ENCODE measurements at regions of chr2 and their contacts with region 1.

Region 1: DNA sequence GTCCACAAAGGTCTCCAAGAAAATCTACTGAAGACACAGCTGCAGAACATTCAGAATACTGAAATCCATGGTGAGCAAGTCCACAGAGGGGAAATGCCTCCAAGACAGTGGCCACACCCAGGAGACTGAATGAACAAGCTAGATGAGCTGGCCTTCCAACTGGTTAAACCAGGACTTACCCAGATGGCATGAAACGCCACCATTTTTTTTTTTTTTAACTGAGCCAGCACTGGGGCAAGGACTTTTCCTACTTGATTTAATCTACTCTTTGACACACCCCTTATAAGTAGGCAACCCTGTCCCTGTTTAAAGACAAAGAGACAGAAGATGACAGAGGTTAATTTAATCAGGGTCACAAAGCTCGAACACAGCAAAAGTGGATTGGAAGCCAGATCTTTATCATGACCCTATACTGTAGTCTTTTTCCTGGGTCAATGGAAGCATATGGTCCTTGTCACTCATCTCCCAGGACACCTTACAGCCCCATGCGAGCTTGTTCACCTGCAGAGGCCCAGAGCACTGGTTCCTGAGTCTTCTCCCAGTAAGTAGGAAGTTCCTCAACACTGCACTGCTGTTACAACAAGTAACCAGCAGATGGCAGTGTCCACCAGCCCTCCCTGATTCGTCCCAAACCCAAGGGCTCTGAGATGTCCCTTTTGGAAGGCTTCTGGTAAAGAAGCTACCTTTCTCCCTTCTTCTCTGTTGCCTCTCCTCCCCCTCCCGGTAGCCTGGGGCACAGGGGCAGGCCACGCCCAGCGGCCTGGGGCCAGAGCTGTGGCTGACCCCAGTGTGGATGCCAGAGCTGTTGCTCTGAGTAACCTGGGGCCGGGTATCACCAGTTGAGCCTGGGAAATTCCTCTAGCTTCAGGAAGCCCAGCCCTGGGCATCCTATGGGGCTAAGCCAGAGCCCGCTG is 5.6 kb upstream of the GDF7 start:
- DNase-seq: peak; percentile 69
- ATAC-seq: peak; percentile 94
- H3K4me3 ChIP-seq: no peak overlapping the region
- H3K27ac ChIP-seq: no peak overlapping the region
- H3K4me1 ChIP-seq: peaks cover 0 to 4% of the 10 kb centered on the region in 2 experiments; a peak in 1 of 4 replicates
- H3K27me3 ChIP-seq: peaks cover 35% of the 10 kb centered on the region
- CTCF ChIP-seq: peak; percentile 87 to 98 (median 96)
- POLR2A ChIP-seq: no peak
- RAD21 ChIP-seq: peak; percentile 96

Region 2: GRCh38 chr2:20650880-20651730 is 10.2 kb before region 1 on chr2 and contains the start of gene HS1BP3:
- CTCF ChIA-PET with region 1: interaction called, 12 read pairs
- POLR2A ChIA-PET with region 1: interaction called, 5 read pairs
- RAD21 ChIA-PET with region 1: no interaction called
- intact Hi-C with region 1: no loop called
- DNase-seq: peak; percentile 28
- ATAC-seq: peak; percentile 97
- H3K4me3 ChIP-seq: peak within 1 kb of the TSS; percentile 82 to 95
- H3K27ac ChIP-seq: peak within 1 kb of the TSS; percentile 69
- H3K4me1 ChIP-seq: peaks cover 5 to 18% of the 10 kb centered on the region in 2 experiments
- H3K27me3 ChIP-seq: no peaks in the 10 kb centered on the region
- CTCF ChIP-seq: peak; percentile 28 to 69 (median 59); a peak in 4 of 6 replicates
- POLR2A ChIP-seq: peak; percentile 84
- RAD21 ChIP-seq: peak; percentile 60
- total RNA-seq, gene HS1BP3: 17.1 TPM

Region 3: GRCh38 chr2:20675701-20676352 is 14.5 kb after region 1 on chr2:
- CTCF ChIA-PET with region 1: interaction called, 30 read pairs
- POLR2A ChIA-PET with region 1: no interaction called
- RAD21 ChIA-PET with region 1: no interaction called
- intact Hi-C with region 1: no loop called
- DNase-seq: no peak
- ATAC-seq: peak; percentile 92
- H3K4me3 ChIP-seq: no peak overlapping the region
- H3K27ac ChIP-seq: no peak overlapping the region
- H3K4me1 ChIP-seq: peaks cover 0 to 11% of the 10 kb centered on the region in 2 experiments; a peak in 2 of 4 replicates
- H3K27me3 ChIP-seq: no peaks in the 10 kb centered on the region
- CTCF ChIP-seq: no peak
- POLR2A ChIP-seq: no peak
- RAD21 ChIP-seq: no peak

Region 4: GRCh38 chr2:20916604-20917286 is 255.4 kb after region 1 on chr2:
- CTCF ChIA-PET with region 1: interaction called, 3 read pairs
- POLR2A ChIA-PET with region 1: no interaction called
- RAD21 ChIA-PET with region 1: no interaction called
- intact Hi-C with region 1: loop called (anchors 1 kb)
- DNase-seq: no peak
- ATAC-seq: peak; percentile 77
- H3K4me3 ChIP-seq: no peak overlapping the region
- H3K27ac ChIP-seq: no peak overlapping the region
- H3K4me1 ChIP-seq: no peaks in the 10 kb centered on the region
- H3K27me3 ChIP-seq: peaks cover 64% of the 10 kb centered on the region
- CTCF ChIP-seq: peak; percentile 14 to 41 (median 39); a peak in 5 of 6 replicates
- POLR2A ChIP-seq: no peak
- RAD21 ChIP-seq: peak; percentile 53

Region 5: DNA sequence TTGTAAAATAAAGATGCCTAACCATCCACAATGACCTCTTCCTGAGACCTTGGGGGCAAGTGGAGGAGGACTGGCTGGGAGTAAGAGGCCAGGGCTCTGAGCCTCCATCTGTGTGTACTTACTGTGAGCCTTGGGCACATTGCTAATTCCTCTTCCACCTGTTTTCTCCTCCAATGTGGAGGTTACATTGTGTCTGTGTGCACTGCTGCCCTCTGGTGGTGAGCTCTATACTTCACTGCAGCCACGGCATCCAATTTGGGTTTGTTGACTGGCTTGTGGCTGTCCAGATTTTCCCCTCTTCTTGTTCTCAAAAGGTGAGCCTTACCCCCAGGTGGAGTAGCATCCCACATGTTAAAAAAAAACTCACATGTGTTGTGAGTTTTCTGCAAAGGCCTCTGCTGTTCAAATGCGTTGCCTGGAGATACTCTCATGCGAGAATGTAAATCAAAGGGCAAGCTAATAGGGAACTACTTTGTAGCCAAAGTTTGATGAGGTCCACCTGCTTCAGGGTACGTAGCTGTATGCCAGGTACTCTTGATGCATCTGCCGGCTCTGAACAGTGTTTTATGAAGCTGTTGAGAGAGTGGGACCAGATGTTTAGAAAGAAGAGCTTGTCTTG is 301.7 kb after region 1 on chr2:
- CTCF ChIA-PET with region 1: interaction called, 66 read pairs
- POLR2A ChIA-PET with region 1: no interaction called
- RAD21 ChIA-PET with region 1: interaction called, 15 read pairs
- intact Hi-C with region 1: loop called (anchors 1 kb)
- DNase-seq: peak; percentile 41
- ATAC-seq: peak; percentile 90
- H3K4me3 ChIP-seq: no peak overlapping the region
- H3K27ac ChIP-seq: no peak overlapping the region
- H3K4me1 ChIP-seq: no peaks in the 10 kb centered on the region
- H3K27me3 ChIP-seq: peaks cover 61% of the 10 kb centered on the region
- CTCF ChIP-seq: peak; percentile 70 to 91 (median 86); a peak in 5 of 6 replicates
- POLR2A ChIP-seq: no peak
- RAD21 ChIP-seq: peak; percentile 80

Region 6: DNA sequence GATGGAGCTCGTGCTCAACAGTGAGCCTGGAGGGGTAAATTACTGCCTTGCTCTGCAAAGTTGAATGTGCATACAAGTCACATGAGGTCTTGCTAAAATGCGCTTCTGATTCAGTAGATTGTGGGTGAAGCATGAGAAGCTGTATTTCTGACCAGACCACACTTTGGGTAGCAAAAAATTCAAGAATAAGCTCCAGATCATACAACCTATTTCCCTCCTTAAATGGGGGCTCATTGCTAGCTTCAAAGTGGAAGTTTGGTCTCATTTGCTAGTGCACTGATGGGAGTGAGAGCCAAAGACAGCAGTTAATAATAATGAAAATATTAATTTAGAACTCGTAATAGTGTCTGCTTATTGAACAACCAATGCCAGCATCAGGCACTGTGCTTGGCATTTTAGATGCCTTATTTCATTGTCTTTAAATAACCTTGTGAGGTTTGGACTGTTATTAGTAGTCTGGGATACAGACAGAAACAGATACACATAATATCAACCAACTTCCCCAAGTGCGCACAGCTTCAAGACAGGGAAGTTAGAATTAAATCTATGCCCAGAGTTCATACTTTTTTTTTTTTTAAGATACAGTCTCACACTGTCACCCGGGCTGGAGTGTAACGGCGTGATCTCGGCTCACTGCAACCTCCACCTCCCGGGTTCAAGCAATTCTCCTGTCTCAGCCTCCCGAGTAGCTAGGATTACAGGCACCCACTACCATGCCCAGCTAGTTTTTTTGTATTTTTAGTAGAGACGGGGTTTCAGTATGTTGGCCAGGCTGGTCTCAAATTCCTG is 364.6 kb after region 1 on chr2:
- CTCF ChIA-PET with region 1: interaction called, 31 read pairs
- POLR2A ChIA-PET with region 1: no interaction called
- RAD21 ChIA-PET with region 1: interaction called in 1 of 2 experiments, 3 read pairs
- intact Hi-C with region 1: loop called (anchors 1 kb)
- DNase-seq: no peak
- ATAC-seq: no peak
- H3K4me3 ChIP-seq: no peak overlapping the region
- H3K27ac ChIP-seq: no peak overlapping the region
- H3K4me1 ChIP-seq: no peaks in the 10 kb centered on the region
- H3K27me3 ChIP-seq: peaks cover 39% of the 10 kb centered on the region
- CTCF ChIP-seq: no peak
- POLR2A ChIP-seq: no peak
- RAD21 ChIP-seq: no peak

Region 7: GRCh38 chr2:21118302-21118920 is 457.1 kb after region 1 on chr2:
- CTCF ChIA-PET with region 1: interaction called, 17 read pairs
- POLR2A ChIA-PET with region 1: no interaction called
- RAD21 ChIA-PET with region 1: no interaction called
- intact Hi-C with region 1: loop called (anchors 1 kb)
- DNase-seq: peak; percentile 26
- ATAC-seq: peak; percentile 75
- H3K4me3 ChIP-seq: no peak overlapping the region
- H3K27ac ChIP-seq: no peak overlapping the region
- H3K4me1 ChIP-seq: no peaks in the 10 kb centered on the region
- H3K27me3 ChIP-seq: peaks cover 11% of the 10 kb centered on the region
- CTCF ChIP-seq: peak; percentile 30 to 70 (median 50); a peak in 5 of 6 replicates
- POLR2A ChIP-seq: no peak
- RAD21 ChIP-seq: peak; percentile 64

Region 8: DNA sequence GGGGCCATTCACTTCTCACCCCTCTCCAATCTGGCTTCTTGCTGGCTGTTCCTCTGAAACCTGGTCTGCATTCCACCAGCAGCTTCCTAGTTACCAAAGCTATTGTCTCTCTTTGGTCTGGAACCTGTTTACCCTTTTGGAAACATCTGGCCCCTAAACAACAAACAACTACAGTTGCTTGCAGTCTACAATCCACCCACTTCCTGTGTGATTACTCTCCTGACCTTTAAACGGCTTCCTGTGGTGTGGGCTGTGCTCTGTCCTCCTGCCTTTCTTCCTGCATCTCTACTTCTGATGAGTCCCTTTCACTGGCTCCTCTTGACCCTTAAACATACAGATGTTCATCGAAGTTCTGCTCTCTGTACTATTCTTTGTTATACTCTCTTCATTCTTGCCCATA is 766.3 kb after region 1 on chr2:
- CTCF ChIA-PET with region 1: no interaction called
- POLR2A ChIA-PET with region 1: no interaction called
- RAD21 ChIA-PET with region 1: no interaction called
- intact Hi-C with region 1: no loop called
- DNase-seq: no peak
- ATAC-seq: no peak
- H3K4me3 ChIP-seq: no peak overlapping the region
- H3K27ac ChIP-seq: no peak overlapping the region
- H3K4me1 ChIP-seq: no peaks in the 10 kb centered on the region
- H3K27me3 ChIP-seq: no peaks in the 10 kb centered on the region
- CTCF ChIP-seq: no peak
- POLR2A ChIP-seq: no peak
- RAD21 ChIP-seq: no peak